B cell (primary cell): ENCODE measurements at regions of chr4 and their contacts with region 1.

Region 1: GRCh38 chr4:169612871-169613859 is 782 bp upstream of the NEK1 start:
- DNase-seq: peak; percentile 82
- ATAC-seq: peak; percentile 26
- H3K4me3 ChIP-seq: peak overlapping the region; percentile 85 to 95 (median 90)
- H3K4me3 Mint-ChIP-seq: peak overlapping the region; percentile 98
- H3K27ac ChIP-seq: peak overlapping the region; percentile 98 to 99
- H3K27ac Mint-ChIP-seq: peak overlapping the region; percentile 99
- H3K4me1 ChIP-seq: peaks cover 6 to 12% of the 10 kb centered on the region in 2 donors
- H3K4me1 Mint-ChIP-seq: peaks cover 22% of the 10 kb centered on the region
- H3K27me3 ChIP-seq: no peaks in the 10 kb centered on the region
- H3K27me3 Mint-ChIP-seq: no peaks in the 10 kb centered on the region
- CTCF ChIP-seq: peak; percentile 87

Region 2: DNA sequence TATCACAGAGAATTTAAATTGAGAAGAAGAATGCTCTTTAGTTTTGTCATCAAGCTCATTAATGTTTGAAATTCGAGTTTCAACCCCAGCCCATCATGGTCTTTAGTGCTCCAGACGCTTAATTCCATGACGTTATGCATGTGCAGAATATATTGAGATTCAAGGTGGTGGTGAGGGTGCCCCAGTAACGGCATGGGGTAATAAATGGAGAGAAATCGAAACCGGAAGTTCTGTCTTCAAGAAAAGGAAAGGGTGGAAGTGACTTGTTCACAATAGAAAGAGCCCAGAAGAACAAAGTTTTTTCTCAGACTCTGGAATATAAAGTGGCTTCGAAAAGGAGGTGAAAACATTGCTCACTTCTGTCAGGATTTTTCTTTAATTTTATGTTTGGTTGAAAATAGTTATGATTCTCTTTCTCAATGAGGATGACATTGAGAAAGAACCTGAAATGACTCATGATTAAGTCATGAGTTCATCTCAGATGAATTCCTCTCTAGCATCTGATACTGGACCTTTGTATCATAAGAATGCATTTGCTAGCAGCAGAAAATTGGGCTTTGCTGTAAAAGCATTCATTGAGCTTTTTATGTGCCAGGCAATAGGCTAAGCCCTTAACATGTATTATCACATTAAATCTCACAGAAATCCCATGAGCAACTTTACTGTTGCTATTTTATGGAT is 1132.1 kb before region 1 on chr4:
- CTCF ChIA-PET with region 1: no interaction called
- POLR2A ChIA-PET with region 1: no interaction called
- intact Hi-C with region 1: loop called (anchors 1 kb)
- DNase-seq: peak; percentile 78
- ATAC-seq: peak; percentile 43
- H3K4me3 ChIP-seq: peak overlapping the region; percentile 86 to 97 (median 91)
- H3K4me3 Mint-ChIP-seq: peak overlapping the region; percentile 98
- H3K27ac ChIP-seq: peak overlapping the region; percentile 88 to 92
- H3K27ac Mint-ChIP-seq: peak overlapping the region; percentile 98
- H3K4me1 ChIP-seq: peaks cover 12% of the 10 kb centered on the region in 2 donors
- H3K4me1 Mint-ChIP-seq: peaks cover 44% of the 10 kb centered on the region
- H3K27me3 ChIP-seq: no peaks in the 10 kb centered on the region
- H3K27me3 Mint-ChIP-seq: peaks cover 5% of the 10 kb centered on the region
- CTCF ChIP-seq: no peak

Region 3: GRCh38 chr4:169523796-169524195 is 89.4 kb before region 1 on chr4:
- CTCF ChIA-PET with region 1: no interaction called
- POLR2A ChIA-PET with region 1: no interaction called
- intact Hi-C with region 1: no loop called
- DNase-seq: no peak
- ATAC-seq: no peak
- H3K4me3 ChIP-seq: no peak overlapping the region
- H3K4me3 Mint-ChIP-seq: no peak overlapping the region
- H3K27ac ChIP-seq: no peak overlapping the region
- H3K27ac Mint-ChIP-seq: no peak overlapping the region
- H3K4me1 ChIP-seq: no peaks in the 10 kb centered on the region
- H3K4me1 Mint-ChIP-seq: no peaks in the 10 kb centered on the region
- H3K27me3 ChIP-seq: no peaks in the 10 kb centered on the region
- H3K27me3 Mint-ChIP-seq: no peaks in the 10 kb centered on the region
- CTCF ChIP-seq: no peak

Region 4: DNA sequence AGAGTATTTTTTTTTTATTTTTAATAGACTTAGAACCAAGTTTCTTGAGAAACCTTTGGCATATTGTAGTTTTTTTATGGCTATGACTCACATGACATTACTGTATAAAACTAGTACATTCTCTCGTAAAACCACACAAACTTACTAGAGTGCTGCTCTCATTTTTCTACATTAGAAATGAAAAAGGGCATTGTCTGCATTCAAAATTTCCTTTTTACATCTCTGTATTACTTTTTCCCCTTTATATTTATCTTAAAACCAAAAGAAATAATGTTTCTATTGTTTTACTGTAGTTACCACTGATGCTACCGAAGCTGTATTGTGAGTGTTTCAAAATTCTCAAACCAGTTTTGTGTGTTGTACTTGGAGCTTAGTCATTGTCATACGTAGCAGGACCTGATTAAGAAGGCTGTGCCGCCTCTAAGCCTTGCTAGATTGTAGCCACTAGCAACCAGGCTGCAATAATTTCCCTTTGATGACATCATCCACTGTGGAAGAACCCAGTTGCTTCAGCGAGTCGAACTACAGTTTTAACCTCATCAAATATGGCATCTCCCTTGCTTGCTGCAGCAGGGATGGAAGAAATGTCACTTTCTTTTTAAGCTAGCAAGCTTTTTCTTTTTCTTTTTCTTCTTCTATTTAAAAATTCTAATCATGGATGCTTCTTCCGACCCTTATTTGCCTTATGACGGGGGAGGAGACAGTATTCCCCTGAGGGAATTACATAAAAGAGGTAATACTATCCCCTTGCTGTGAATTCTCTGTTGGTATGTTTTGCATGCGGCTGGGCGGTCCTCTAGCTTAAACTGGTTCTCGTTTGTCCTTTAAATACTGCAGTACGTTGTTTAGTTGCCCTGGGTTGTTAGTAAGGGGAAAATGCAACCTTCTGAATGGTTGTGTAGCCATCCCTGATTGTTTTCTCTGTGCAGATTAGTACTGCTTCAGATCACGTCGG is 46.8 kb after region 1 on chr4:
- CTCF ChIA-PET with region 1: interaction called, 35 read pairs
- POLR2A ChIA-PET with region 1: interaction called, 3 read pairs
- intact Hi-C with region 1: no loop called
- DNase-seq: peak; percentile 91
- ATAC-seq: peak; percentile 90
- H3K4me3 ChIP-seq: peak overlapping the region; percentile 42 to 75 (median 60)
- H3K4me3 Mint-ChIP-seq: peak overlapping the region; percentile 85
- H3K27ac ChIP-seq: peak overlapping the region; percentile 90 to 92
- H3K27ac Mint-ChIP-seq: peak overlapping the region; percentile 90
- H3K4me1 ChIP-seq: peaks cover 2 to 6% of the 10 kb centered on the region in 2 donors
- H3K4me1 Mint-ChIP-seq: peaks cover 23% of the 10 kb centered on the region
- H3K27me3 ChIP-seq: no peaks in the 10 kb centered on the region
- H3K27me3 Mint-ChIP-seq: no peaks in the 10 kb centered on the region
- CTCF ChIP-seq: no peak

Region 5: GRCh38 chr4:169774466-169775445 is 161.6 kb after region 1 on chr4:
- CTCF ChIA-PET with region 1: interaction called, 14 read pairs
- POLR2A ChIA-PET with region 1: no interaction called
- intact Hi-C with region 1: no loop called
- DNase-seq: peak; percentile 56
- ATAC-seq: peak; percentile 67
- H3K4me3 ChIP-seq: peak overlapping the region in 3 of 5 experiments; percentile 9 to 35 (median 33)
- H3K4me3 Mint-ChIP-seq: peak overlapping the region; percentile 49
- H3K27ac ChIP-seq: no peak overlapping the region
- H3K27ac Mint-ChIP-seq: no peak overlapping the region
- H3K4me1 ChIP-seq: peaks cover 8 to 10% of the 10 kb centered on the region in 2 donors
- H3K4me1 Mint-ChIP-seq: peaks cover 6% of the 10 kb centered on the region
- H3K27me3 ChIP-seq: peaks cover 0 to 24% (median 16%) of the 10 kb centered on the region in 4 experiments
- H3K27me3 Mint-ChIP-seq: peaks cover 30% of the 10 kb centered on the region
- CTCF ChIP-seq: peak; percentile 28

Region 6: GRCh38 chr4:169975838-169976796 is 363.0 kb after region 1 on chr4:
- CTCF ChIA-PET with region 1: no interaction called
- POLR2A ChIA-PET with region 1: no interaction called
- intact Hi-C with region 1: no loop called
- DNase-seq: no peak
- ATAC-seq: no peak
- H3K4me3 ChIP-seq: no peak overlapping the region
- H3K4me3 Mint-ChIP-seq: no peak overlapping the region
- H3K27ac ChIP-seq: no peak overlapping the region
- H3K27ac Mint-ChIP-seq: no peak overlapping the region
- H3K4me1 ChIP-seq: no peaks in the 10 kb centered on the region
- H3K4me1 Mint-ChIP-seq: no peaks in the 10 kb centered on the region
- H3K27me3 ChIP-seq: peaks cover 0 to 8% (median 4%) of the 10 kb centered on the region in 4 experiments
- H3K27me3 Mint-ChIP-seq: peaks cover 9% of the 10 kb centered on the region
- CTCF ChIP-seq: no peak

Region 7: DNA sequence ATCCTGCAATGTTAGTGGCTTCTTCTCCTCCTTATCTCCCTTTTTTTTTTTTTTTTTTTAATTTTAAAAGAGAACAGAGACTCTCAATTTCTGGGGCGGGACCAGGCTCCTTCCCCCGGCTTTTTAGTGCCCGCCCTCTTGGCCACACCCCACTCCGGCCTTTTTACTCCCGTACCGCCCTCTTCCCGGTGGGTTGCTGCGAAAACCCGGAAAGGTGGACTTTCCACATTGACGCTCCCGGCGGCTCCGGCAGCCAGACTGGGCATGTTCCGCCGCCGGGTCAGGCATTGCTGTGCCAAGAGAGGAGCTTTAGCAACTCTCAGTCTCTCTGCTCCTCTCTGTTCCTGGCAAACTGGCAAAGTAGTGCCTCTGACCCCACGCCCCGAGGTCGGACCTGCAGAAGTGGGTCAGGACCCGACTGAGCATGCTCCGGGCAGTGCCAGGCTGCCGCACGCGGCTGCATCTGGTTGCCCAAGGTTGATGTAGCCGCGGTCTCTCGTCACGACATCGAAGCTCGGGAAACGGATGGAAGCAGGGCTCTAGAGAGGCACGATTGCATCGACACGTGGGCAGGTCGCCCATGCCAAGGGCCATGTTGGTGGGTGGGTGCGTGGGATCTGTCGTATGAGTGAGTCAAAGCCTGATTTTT is 414.1 kb after region 1 on chr4:
- CTCF ChIA-PET with region 1: interaction called, 5 read pairs
- POLR2A ChIA-PET with region 1: interaction called, 3 read pairs
- intact Hi-C with region 1: loop called (anchors 2 kb)
- DNase-seq: peak; percentile 94
- ATAC-seq: peak; percentile 76
- H3K4me3 ChIP-seq: peak overlapping the region; percentile 52 to 95 (median 81)
- H3K4me3 Mint-ChIP-seq: peak overlapping the region; percentile 92
- H3K27ac ChIP-seq: no peak overlapping the region
- H3K27ac Mint-ChIP-seq: peak overlapping the region; percentile 80
- H3K4me1 ChIP-seq: peaks cover 11 to 16% of the 10 kb centered on the region in 2 donors
- H3K4me1 Mint-ChIP-seq: peaks cover 12% of the 10 kb centered on the region
- H3K27me3 ChIP-seq: peaks cover 0 to 25% (median 8%) of the 10 kb centered on the region in 4 experiments
- H3K27me3 Mint-ChIP-seq: peaks cover 29% of the 10 kb centered on the region
- CTCF ChIP-seq: no peak